Keratinocyte (primary cell): ENCODE measurements at regions of chr13 and their contacts with region 1.

Region 1: GRCh38 chr13:83995930-83996329 is 113.7 kb upstream of the SLITRK1 start:
- DNase-seq: no peak
- H3K4me3 ChIP-seq: no peak overlapping the region
- H3K27ac ChIP-seq: no peak overlapping the region
- H3K4me1 ChIP-seq: no peaks in the 10 kb centered on the region
- H3K27me3 ChIP-seq: no peaks in the 10 kb centered on the region
- CTCF ChIP-seq: no peak

Region 2: DNA sequence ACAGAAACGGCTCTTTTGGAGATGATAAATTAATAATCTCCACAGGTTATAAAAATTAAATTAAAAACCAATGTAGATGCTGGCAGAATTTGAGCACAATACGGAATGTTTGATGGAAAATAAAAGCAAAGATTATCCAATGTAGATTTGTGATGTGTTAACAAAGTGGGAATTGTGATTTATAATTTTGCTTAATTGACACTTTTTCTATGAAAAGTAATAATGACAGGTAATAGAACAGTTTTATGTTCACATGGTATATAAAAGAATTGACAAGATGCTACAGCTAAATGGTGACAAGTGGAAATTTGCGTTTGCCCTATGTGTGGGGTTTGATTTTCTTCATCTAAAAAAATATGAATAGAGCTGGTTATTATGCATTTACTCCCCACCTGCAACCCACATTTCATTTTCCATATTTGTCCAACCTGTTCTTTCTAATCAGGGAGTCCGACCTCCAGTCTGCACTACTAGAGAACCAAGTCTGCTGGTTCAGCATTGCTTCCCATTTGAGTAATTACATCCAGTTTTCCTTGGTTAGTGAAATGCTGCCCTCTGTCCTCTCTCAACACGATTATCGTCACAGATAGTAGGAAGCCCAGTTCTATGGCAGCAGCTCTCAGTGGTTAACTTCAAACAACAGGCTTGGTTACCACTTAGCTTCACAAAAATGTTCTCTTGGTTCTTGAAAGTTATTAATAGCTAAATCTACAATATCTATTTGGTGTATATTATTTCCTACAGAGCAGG is 52.2 kb before region 1 on chr13:
- dilution Hi-C with region 1: loop called (anchors 5 kb)
- DNase-seq: no peak
- H3K4me3 ChIP-seq: no peak overlapping the region
- H3K27ac ChIP-seq: no peak overlapping the region
- H3K4me1 ChIP-seq: peaks cover 19% of the 10 kb centered on the region
- H3K27me3 ChIP-seq: no peaks in the 10 kb centered on the region
- CTCF ChIP-seq: no peak

Region 3: DNA sequence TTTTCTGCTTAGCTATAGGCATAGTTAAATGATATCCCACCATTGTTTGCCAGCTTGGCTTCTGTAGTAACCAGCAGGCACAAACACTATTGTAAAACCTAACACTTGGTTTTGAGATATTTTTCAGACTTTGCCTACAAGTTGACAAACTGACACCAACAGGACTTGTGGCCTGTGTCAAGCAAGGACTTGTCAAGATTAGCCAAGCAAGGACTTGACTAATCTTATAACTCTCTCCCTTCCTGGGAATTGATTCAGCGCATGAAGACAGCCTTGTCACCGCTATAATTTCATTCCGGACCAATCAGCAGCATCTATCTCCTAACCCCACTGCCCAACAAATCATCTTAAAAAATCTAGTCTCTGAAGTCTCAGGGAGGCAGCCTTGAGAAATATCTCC is 40.9 kb before region 1 on chr13:
- dilution Hi-C with region 1: no loop called
- DNase-seq: no peak
- H3K4me3 ChIP-seq: no peak overlapping the region
- H3K27ac ChIP-seq: no peak overlapping the region
- H3K4me1 ChIP-seq: peaks cover 7% of the 10 kb centered on the region
- H3K27me3 ChIP-seq: no peaks in the 10 kb centered on the region
- CTCF ChIP-seq: no peak

Region 4: DNA sequence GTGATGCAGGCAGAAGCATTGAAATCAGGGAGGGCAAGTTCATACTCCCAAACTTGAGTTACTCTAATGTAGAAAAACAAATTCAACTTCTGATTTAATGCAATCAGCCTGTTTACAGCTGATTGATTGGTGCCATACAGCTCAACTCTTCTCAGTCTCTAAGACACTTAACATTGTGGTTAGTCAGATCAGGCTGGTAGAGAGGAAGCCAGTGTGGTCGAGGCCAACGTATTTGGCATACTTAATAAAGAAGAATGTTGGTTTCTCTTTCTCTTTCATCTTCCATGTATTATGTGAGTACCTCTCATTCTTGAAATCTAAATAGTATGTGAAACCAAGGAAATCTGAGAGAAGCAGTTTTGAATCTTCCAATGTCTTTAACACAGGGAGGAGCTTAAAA is 141.4 kb after region 1 on chr13:
- dilution Hi-C with region 1: no loop called
- DNase-seq: no peak
- H3K4me3 ChIP-seq: peak overlapping the region in 2 of 3 experiments; percentile 31 to 53
- H3K27ac ChIP-seq: no peak overlapping the region
- H3K4me1 ChIP-seq: peaks cover 14% of the 10 kb centered on the region
- H3K27me3 ChIP-seq: no peaks in the 10 kb centered on the region
- CTCF ChIP-seq: no peak

Region 5: DNA sequence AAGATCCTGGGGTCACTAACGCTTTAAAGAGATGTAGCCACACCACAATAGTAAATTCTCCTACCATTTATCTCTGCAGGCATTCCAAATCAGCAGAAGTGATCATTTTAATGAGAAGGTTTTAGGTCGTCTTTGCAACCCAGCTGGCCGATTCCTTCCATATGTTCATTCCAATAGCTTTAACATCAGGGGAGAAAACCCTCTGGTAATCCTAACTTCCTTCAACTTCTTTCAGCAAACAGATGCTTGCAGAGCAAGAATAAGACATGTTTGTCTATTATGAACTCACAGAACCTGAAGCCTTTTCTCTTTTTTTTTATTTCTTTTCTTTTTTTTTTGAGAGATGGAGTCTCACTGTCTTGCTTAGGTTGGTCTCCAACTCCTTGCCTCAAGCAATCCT is 384.9 kb after region 1 on chr13:
- dilution Hi-C with region 1: no loop called
- DNase-seq: no peak
- H3K4me3 ChIP-seq: no peak overlapping the region
- H3K27ac ChIP-seq: no peak overlapping the region
- H3K4me1 ChIP-seq: peaks cover 5% of the 10 kb centered on the region
- H3K27me3 ChIP-seq: no peaks in the 10 kb centered on the region
- CTCF ChIP-seq: no peak